Mammary epithelial cell (primary cell): ENCODE measurements at regions of chr12 and their contacts with region 1.

Region 1: GRCh38 chr12:10721651-10722501 is 1.2 kb downstream of the YBX3 start:
- DNase-seq: peak; percentile 97
- H3K4me3 ChIP-seq: peak overlapping the region; percentile 71 to 81 (median 75)
- H3K27ac ChIP-seq: peak overlapping the region; percentile 98
- H3K4me1 ChIP-seq: peaks cover 45% of the 10 kb centered on the region
- H3K27me3 ChIP-seq: no peaks in the 10 kb centered on the region
- CTCF ChIP-seq: no peak

Region 2: GRCh38 chr12:10212201-10213131 is 509.4 kb before region 1 on chr12 and contains the start of gene GABARAPL1:
- CTCF ChIA-PET with region 1: no interaction called
- dilution Hi-C with region 1: no loop called
- in situ Hi-C with region 1: no loop called
- intact Hi-C with region 1: loop called (anchors 1 kb)
- DNase-seq: peak; percentile 99
- H3K4me3 ChIP-seq: peak within 1 kb of the TSS; percentile 67 to 99 (median 70)
- H3K27ac ChIP-seq: peak within 1 kb of the TSS; percentile 99
- H3K4me1 ChIP-seq: peaks cover 19% of the 10 kb centered on the region
- H3K27me3 ChIP-seq: no peaks in the 10 kb centered on the region
- CTCF ChIP-seq: no peak
- total RNA-seq, gene GABARAPL1: 18.6 to 55.0 TPM

Region 3: GRCh38 chr12:10613349-10614055 is 108.4 kb before region 1 on chr12 and contains the start of gene MAGOHB:
- CTCF ChIA-PET with region 1: no interaction called
- dilution Hi-C with region 1: loop called (anchors 5 kb)
- in situ Hi-C with region 1: no loop called
- intact Hi-C with region 1: loop called (anchors 1 kb)
- DNase-seq: peak; percentile 95
- H3K4me3 ChIP-seq: peak within 1 kb of the TSS; percentile 93 to 99 (median 96)
- H3K27ac ChIP-seq: peak within 1 kb of the TSS; percentile 100
- H3K4me1 ChIP-seq: peaks cover 26% of the 10 kb centered on the region
- H3K27me3 ChIP-seq: no peaks in the 10 kb centered on the region
- CTCF ChIP-seq: no peak
- total RNA-seq, gene MAGOHB: 10.7 to 28.0 TPM

Region 4: DNA sequence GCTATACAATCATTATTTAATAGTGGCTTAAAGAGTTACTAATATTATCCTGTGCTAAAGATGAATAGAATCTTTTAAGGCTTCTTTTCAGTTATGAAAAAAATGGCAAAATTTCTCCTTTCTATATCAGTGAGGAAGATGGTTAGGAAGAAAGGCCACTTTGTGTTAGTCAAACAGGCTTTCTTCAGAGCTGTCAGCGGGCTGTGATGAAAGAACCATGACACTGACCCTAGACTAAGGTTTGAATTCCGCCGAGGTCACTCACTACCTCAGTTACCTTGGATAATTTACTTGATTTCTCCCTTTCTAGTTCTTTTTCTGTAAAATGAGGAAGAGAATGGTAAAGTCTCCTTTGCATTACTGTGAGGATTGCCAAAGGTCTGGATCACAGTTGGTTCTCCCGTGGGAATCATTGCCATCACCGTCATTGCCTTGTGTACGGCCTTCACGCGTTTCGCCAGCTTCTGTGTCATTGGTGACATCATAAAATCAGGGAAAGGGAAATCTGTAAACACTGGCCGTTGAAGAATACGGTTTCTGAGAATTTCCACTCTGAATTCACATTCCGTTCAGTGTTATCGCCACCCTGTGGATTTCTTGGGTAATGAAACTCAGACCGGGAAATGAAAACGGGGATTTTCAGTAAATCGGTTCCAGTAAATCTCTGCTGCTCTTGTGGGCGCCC is 28.0 kb after region 1 on chr12:
- CTCF ChIA-PET with region 1: interaction called, 9 read pairs
- dilution Hi-C with region 1: no loop called
- in situ Hi-C with region 1: no loop called
- intact Hi-C with region 1: loop called (anchors 1 kb)
- DNase-seq: peak; percentile 90
- H3K4me3 ChIP-seq: peak overlapping the region; percentile 6 to 34 (median 11)
- H3K27ac ChIP-seq: peak overlapping the region; percentile 51
- H3K4me1 ChIP-seq: peaks cover 7% of the 10 kb centered on the region
- H3K27me3 ChIP-seq: no peaks in the 10 kb centered on the region
- CTCF ChIP-seq: peak; percentile 90 to 93